Activated naive CD4-positive, alpha-beta T cell treated with anti-CD3 and anti-CD28 coated beads for 36 hours (primary cell): ENCODE measurements at regions of chr6 and their contacts with region 1.

Region 1: GRCh38 chr6:13668291-13668928 is 43.2 kb downstream of the RANBP9 start:
- DNase-seq: no peak
- H3K4me3 Mint-ChIP-seq: peak overlapping the region; percentile 5
- H3K27ac Mint-ChIP-seq: peak overlapping the region; percentile 86
- H3K4me1 Mint-ChIP-seq: peaks cover 90% of the 10 kb centered on the region
- H3K27me3 Mint-ChIP-seq: no peaks in the 10 kb centered on the region

Region 2: GRCh38 chr6:13624871-13625288 is 43.5 kb before region 1 on chr6:
- CTCF ChIA-PET with region 1: interaction called, 3 read pairs
- intact Hi-C with region 1: loop called (anchors 5 kb)
- DNase-seq: peak; percentile 37
- H3K4me3 Mint-ChIP-seq: no peak overlapping the region
- H3K27ac Mint-ChIP-seq: peak overlapping the region; percentile 54
- H3K4me1 Mint-ChIP-seq: peaks cover 30% of the 10 kb centered on the region
- H3K27me3 Mint-ChIP-seq: no peaks in the 10 kb centered on the region

Region 3: DNA sequence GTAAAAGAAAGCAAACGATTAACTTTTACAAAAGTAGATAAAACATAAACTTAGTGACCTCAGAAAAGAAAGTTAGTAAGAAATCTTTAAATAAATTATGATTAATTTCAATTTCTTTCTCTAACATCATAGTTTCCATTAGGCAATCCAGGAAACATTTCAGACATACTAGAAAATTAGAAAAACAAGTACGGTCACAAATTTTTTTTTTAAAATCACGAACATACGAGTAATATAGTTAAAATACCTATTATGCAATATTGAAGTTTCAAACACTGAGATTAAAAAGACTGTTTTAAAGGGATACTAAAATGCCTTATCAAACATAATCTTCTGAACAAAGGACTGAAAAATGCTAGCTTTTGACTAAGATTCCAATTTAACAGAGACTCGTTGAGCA is 27.1 kb before region 1 on chr6:
- CTCF ChIA-PET with region 1: no interaction called
- intact Hi-C with region 1: loop called (anchors 1 kb)
- DNase-seq: no peak
- H3K4me3 Mint-ChIP-seq: no peak overlapping the region
- H3K27ac Mint-ChIP-seq: peak overlapping the region; percentile 89
- H3K4me1 Mint-ChIP-seq: peaks cover 46% of the 10 kb centered on the region
- H3K27me3 Mint-ChIP-seq: no peaks in the 10 kb centered on the region

Region 4: DNA sequence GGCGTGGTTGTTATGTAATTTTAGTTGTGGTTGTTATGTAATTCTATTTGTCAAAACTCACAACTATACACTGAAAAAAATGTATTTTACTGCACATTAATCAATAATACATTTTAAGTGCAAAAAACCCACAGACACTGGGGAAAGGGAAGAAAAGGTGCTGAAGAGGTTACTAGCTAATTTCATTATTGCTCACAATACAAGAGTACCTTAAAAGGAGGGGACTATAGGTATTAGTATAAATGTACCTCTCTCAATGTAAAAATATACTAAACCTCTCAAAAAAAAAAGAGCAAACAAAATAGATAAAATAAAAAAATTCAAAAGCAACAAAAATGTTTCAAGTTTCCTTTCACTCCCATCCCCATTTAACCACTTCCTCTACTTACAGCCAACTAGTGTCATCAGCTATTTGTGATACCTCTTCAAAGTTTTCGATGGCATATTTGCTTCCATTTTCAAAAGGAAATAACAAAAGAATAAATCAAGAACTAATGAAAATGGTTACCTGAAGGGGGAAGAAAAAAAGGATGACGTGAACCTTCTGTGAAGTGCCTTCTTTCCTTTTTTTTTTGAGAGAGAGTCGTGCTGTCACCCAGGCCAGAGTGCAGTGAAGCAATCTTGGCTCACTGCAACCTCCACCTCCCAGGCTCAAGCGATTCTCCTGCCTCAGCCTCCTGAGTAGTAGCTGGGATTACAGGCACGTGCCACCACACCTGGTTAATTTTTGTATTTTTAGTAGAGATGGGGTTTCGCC is 13.1 kb after region 1 on chr6:
- CTCF ChIA-PET with region 1: interaction called, 10 read pairs
- intact Hi-C with region 1: loop called (anchors 2 kb)
- DNase-seq: peak; percentile 21
- H3K4me3 Mint-ChIP-seq: peak overlapping the region; percentile 65
- H3K27ac Mint-ChIP-seq: peak overlapping the region; percentile 89
- H3K4me1 Mint-ChIP-seq: peaks cover 53% of the 10 kb centered on the region
- H3K27me3 Mint-ChIP-seq: no peaks in the 10 kb centered on the region

Region 5: GRCh38 chr6:13687917-13688351 is 19.5 kb after region 1 on chr6:
- CTCF ChIA-PET with region 1: no interaction called
- intact Hi-C with region 1: loop called (anchors 1 kb)
- DNase-seq: no peak
- H3K4me3 Mint-ChIP-seq: no peak overlapping the region
- H3K27ac Mint-ChIP-seq: peak overlapping the region; percentile 79
- H3K4me1 Mint-ChIP-seq: peaks cover 67% of the 10 kb centered on the region
- H3K27me3 Mint-ChIP-seq: no peaks in the 10 kb centered on the region

Region 6: GRCh38 chr6:14129575-14129974 is 461.2 kb after region 1 on chr6:
- CTCF ChIA-PET with region 1: no interaction called
- intact Hi-C with region 1: no loop called
- DNase-seq: peak; percentile 57
- H3K4me3 Mint-ChIP-seq: no peak overlapping the region
- H3K27ac Mint-ChIP-seq: no peak overlapping the region
- H3K4me1 Mint-ChIP-seq: peaks cover 23% of the 10 kb centered on the region
- H3K27me3 Mint-ChIP-seq: no peaks in the 10 kb centered on the region